ENCODE measurements at regions of chr2 and their contacts with region 1.

Region 1: GRCh38 chr2:218033590-218034496 is 31.0 kb upstream of the TNS1 start:
- DNase-seq: no peak
- H3K4me3 ChIP-seq: no peak overlapping the region
- CTCF ChIP-seq: no peak

Region 2: DNA sequence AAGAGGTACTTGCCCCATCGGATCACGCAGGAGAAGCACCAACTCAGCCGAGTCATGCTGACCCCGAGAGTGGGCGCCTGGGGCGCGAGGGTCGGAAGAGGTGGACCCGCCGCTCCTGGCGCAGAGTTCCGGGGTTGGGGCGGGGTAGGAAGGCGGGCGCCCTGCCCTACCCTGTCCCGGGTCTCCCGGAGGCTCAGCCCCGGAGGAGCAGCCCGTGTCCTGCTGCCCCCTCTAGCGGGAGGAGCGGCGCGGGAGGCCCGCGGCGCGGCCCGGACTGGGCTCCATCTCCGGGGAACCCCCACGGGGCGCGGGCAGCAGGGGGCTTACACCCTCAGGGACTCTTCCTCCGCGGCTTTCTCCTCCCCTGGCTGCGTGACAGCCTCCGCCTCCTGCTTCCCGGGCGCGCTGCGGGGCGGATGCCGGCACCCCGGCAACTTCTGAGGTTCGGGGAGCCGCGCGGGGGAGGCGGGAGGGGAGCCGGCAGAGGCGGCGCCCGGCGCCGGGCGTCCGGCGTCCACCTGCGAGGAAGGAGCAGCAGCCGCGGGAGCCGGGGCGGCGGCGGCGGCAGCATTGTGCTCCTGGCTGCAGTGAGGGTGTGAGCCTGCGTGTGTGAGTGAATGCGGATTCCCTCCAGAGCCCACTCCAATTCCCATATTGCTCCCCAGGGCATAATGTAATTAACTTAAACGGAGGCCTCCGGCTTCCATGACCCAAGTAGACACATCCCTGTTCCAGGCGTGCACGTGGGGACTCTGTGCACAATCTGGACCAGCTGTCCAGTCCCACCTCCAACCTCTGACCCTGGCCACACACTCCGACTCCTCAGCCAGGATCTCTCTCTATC is 23.5 kb before region 1 on chr2:
- CTCF ChIA-PET with region 1: interaction called, 21 read pairs
- POLR2A ChIA-PET with region 1: no interaction called
- DNase-seq: no peak
- H3K4me3 ChIP-seq: peak overlapping the region; percentile 74
- CTCF ChIP-seq: peak; percentile 82

Region 3: GRCh38 chr2:218046238-218046637 is 12.4 kb after region 1 on chr2:
- CTCF ChIA-PET with region 1: interaction called, 30 read pairs
- POLR2A ChIA-PET with region 1: no interaction called
- DNase-seq: no peak
- H3K4me3 ChIP-seq: no peak overlapping the region
- CTCF ChIP-seq: no peak

Measured in AG04449 (cell line).